ENCODE measurements at regions of chr5 and their contacts with region 1.

Region 1: DNA sequence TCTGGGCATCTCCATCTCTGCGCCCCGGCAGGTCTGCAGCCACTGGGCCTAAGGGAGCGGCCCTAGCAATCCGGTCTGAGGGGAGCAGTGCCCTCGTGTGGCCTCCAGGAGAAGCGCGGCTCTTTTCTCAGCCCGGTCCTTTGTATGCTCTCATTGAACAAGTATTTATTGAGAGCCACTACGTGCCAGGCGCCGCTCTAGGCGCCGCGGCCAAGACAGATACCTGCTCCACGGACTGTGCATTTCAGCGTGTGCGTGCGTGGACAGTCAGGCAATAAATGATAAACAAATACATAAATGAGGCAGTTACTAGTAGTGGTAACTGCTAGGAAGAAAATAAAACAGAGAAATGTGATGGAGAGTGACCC is 2.3 kb upstream of the SLC4A9 start:
- DNase-seq: peak; percentile 75 to 88
- H3K4me3 ChIP-seq: no peak overlapping the region
- H3K27ac ChIP-seq: no peak overlapping the region
- H3K4me1 ChIP-seq: peaks cover 0 to 5% (median 0%) of the 10 kb centered on the region in 4 experiments; a peak in 2 of 7 replicates
- H3K27me3 ChIP-seq: no peaks in the 10 kb centered on the region
- CTCF ChIP-seq: peak in 2 of 3 experiments; percentile 92 to 93; a peak in 3 of 4 replicates
- EP300 ChIP-seq: no peak
- POLR2A ChIP-seq: no peak
- RAD21 ChIP-seq: peak; percentile 76 to 85

Region 2: DNA sequence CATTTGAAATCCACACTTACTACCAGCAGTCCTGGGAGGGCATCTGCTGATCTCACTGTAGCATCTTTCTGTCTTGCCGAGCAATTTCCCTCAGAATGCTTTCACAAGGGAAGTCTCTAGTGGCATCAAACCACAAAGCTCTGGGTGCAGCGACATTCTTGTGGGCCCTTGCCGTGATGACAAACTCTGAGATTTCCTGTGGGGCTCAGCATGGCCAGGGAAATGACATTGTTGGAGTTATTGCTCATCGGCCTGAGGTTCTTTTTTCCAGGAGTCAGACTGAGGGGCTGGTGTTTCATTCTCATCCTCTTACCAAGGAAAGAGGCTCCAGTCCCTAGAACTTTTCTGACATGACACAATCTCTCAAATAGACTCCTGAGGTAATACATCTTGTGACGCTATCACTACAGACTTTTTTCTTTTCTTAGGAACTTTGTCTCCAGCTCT is 106.2 kb before region 1 on chr5:
- CTCF ChIA-PET with region 1: interaction called, 676 read pairs
- POLR2A ChIA-PET with region 1: interaction called, 3 read pairs
- DNase-seq: no peak
- H3K4me3 ChIP-seq: no peak overlapping the region
- H3K27ac ChIP-seq: no peak overlapping the region
- H3K4me1 ChIP-seq: peaks cover 0 to 4% (median under 1%) of the 10 kb centered on the region in 4 experiments; a peak in 4 of 7 replicates
- H3K27me3 ChIP-seq: no peaks in the 10 kb centered on the region
- CTCF ChIP-seq: no peak
- EP300 ChIP-seq: no peak
- POLR2A ChIP-seq: no peak
- RAD21 ChIP-seq: no peak

Region 3: GRCh38 chr5:140261403-140262171 is 96.1 kb before region 1 on chr5:
- CTCF ChIA-PET with region 1: interaction called, 676 read pairs
- POLR2A ChIA-PET with region 1: no interaction called
- DNase-seq: no peak
- H3K4me3 ChIP-seq: no peak overlapping the region
- H3K27ac ChIP-seq: no peak overlapping the region
- H3K4me1 ChIP-seq: peaks cover 0 to 2% (median 0%) of the 10 kb centered on the region in 4 experiments; a peak in 4 of 7 replicates
- H3K27me3 ChIP-seq: no peaks in the 10 kb centered on the region
- CTCF ChIP-seq: no peak
- EP300 ChIP-seq: no peak
- POLR2A ChIP-seq: no peak
- RAD21 ChIP-seq: no peak

Region 4: DNA sequence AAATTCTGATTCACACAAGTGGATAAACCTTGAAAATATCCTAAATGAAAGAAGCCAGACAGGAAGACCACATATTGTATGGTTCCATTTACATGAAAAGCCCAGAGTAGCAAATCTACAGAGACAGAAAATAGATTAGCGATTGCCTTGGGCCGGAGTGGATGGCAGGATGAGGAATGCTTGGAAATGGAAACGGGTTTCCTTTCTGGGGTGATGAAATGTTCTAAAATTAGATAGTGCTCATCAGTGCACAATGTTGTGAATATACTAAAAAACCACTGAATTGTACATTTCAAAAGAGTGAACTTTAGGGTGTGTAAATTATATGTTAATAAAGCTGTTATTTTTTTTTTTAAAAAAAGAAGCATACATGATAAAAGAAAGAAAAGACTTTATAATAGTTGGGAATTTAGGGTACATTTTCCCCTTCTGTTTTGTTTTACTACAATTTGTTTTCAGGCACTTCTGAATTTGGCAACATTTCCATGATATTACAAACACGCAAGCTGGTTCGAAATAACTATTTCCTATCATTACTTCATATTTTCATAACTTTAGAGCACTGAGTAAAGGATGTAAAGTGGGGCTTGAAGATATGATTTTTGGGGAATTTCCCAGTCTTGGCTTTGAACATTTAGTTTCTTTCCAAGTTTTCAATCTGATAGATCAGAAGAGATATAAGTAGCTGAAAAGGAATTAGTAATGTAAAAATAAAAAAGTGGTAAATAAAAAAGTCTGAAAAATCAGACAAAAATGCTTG is 230.8 kb after region 1 on chr5:
- CTCF ChIA-PET with region 1: no interaction called
- POLR2A ChIA-PET with region 1: no interaction called
- DNase-seq: no peak
- H3K4me3 ChIP-seq: no peak overlapping the region
- H3K27ac ChIP-seq: no peak overlapping the region
- H3K4me1 ChIP-seq: no peaks in the 10 kb centered on the region
- H3K27me3 ChIP-seq: no peaks in the 10 kb centered on the region
- CTCF ChIP-seq: no peak
- EP300 ChIP-seq: no peak
- POLR2A ChIP-seq: no peak
- RAD21 ChIP-seq: no peak